Breast epithelium (tissue), 4 donors: ENCODE measurements at regions of chr10 and their contacts with region 1.

Region 1: DNA sequence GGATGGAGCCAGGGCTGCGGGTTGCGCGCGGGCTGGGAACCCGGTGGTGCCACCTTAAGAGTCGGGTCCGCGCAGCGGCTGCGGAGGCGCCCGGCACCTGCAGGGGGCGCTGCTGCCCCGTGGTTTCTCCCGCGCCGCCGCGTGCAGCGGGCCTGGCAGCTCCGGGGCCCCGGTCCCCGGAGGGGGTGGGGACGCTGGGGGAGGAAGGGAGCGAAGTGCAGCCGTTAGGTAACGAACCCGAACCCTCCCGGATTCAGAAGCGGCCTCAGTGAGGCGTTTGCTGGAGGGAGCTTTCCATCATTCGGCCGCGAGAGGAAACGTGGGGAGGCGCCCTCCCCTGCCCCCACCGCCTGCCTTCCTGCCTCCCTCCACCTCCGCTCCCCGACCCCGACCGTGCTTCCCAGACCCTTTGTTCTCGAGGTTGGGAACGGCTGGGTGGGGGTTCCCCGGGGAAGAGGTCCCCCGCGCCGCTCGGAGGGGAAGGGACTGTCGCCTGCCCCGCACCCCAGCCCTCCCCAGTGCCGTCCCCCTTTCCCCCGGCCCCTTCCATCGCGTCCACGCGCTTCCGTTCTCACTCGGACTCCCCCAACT is 29.6 kb downstream of the SKIDA1 start:
- DNase-seq: peak; percentile 66 to 77
- H3K4me3 ChIP-seq: peak overlapping the region; percentile 69 to 82 (median 70)
- H3K27ac ChIP-seq: peak overlapping the region; percentile 40 to 59
- H3K4me1 ChIP-seq: no peaks in the 10 kb centered on the region
- H3K27me3 ChIP-seq: no peaks in the 10 kb centered on the region
- CTCF ChIP-seq: peak; percentile 66 to 95 (median 87)
- POLR2A ChIP-seq: no peak

Region 2: GRCh38 chr10:21278491-21279239 is 217.2 kb before region 1 on chr10:
- intact Hi-C with region 1: loop called (anchors 5 kb)
- DNase-seq: peak; percentile 86 to 91
- H3K4me3 ChIP-seq: no peak overlapping the region
- H3K27ac ChIP-seq: no peak overlapping the region
- H3K4me1 ChIP-seq: no peaks in the 10 kb centered on the region
- H3K27me3 ChIP-seq: no peaks in the 10 kb centered on the region
- CTCF ChIP-seq: peak; percentile 74 to 84 (median 83)
- POLR2A ChIP-seq: no peak

Region 3: GRCh38 chr10:22003079-22003913 is 507.4 kb after region 1 on chr10 and contains the start of gene DNAJC1:
- intact Hi-C with region 1: loop called (anchors 10 kb)
- DNase-seq: peak; percentile 97 to 98
- H3K4me3 ChIP-seq: peak within 1 kb of the TSS; percentile 67 to 74 (median 72)
- H3K27ac ChIP-seq: peak within 1 kb of the TSS; percentile 95 to 96
- H3K4me1 ChIP-seq: no peaks in the 10 kb centered on the region
- H3K27me3 ChIP-seq: no peaks in the 10 kb centered on the region
- CTCF ChIP-seq: peak in 1 of 3 donors; percentile 37
- POLR2A ChIP-seq: no peak
- total RNA-seq, gene DNAJC1: 63.7 to 93.0 (median 92.1) TPM

Region 4: GRCh38 chr10:22218451-22218850 is 722.6 kb after region 1 on chr10:
- intact Hi-C with region 1: loop called (anchors 5 kb)
- DNase-seq: no peak
- H3K4me3 ChIP-seq: no peak overlapping the region
- H3K27ac ChIP-seq: no peak overlapping the region
- H3K4me1 ChIP-seq: no peaks in the 10 kb centered on the region
- H3K27me3 ChIP-seq: no peaks in the 10 kb centered on the region
- CTCF ChIP-seq: no peak
- POLR2A ChIP-seq: no peak